ENCODE measurements at regions of chr2 and their contacts with region 1.

Region 1: GRCh38 chr2:19863303-19864041 is 38.3 kb downstream of the TTC32 start:
- DNase-seq: peak; percentile 70 to 72
- ATAC-seq: peak; percentile 87 to 93
- H3K4me3 ChIP-seq: no peak overlapping the region
- H3K27ac ChIP-seq: peak overlapping the region; percentile 69 to 77
- H3K4me1 ChIP-seq: peaks cover 17% of the 10 kb centered on the region
- CTCF ChIP-seq: peak; percentile 99
- EP300 ChIP-seq: no peak
- POLR2A ChIP-seq: no peak
- RAD21 ChIP-seq: peak; percentile 99 to 100

Region 2: GRCh38 chr2:18387441-18388206 is 1475.8 kb before region 1 on chr2:
- CTCF ChIA-PET with region 1: interaction called, 11 read pairs
- POLR2A ChIA-PET with region 1: no interaction called
- DNase-seq: peak; percentile 54 to 82
- ATAC-seq: peak; percentile 95 to 97
- H3K4me3 ChIP-seq: no peak overlapping the region
- H3K27ac ChIP-seq: peak overlapping the region; percentile 31 to 56; a peak in 3 of 6 replicates
- H3K4me1 ChIP-seq: no peaks in the 10 kb centered on the region
- CTCF ChIP-seq: peak; percentile 97
- EP300 ChIP-seq: no peak
- POLR2A ChIP-seq: no peak
- RAD21 ChIP-seq: peak; percentile 95 to 96

Region 3: GRCh38 chr2:19347619-19348562 is 515.6 kb before region 1 on chr2:
- CTCF ChIA-PET with region 1: interaction called, 12 read pairs
- POLR2A ChIA-PET with region 1: interaction called, 3 read pairs
- DNase-seq: peak; percentile 98
- ATAC-seq: peak; percentile 89 to 94
- H3K4me3 ChIP-seq: peak overlapping the region; percentile 75
- H3K27ac ChIP-seq: peak overlapping the region; percentile 91 to 92
- H3K4me1 ChIP-seq: peaks cover 6% of the 10 kb centered on the region; the same call in 1 of the 3 replicates
- CTCF ChIP-seq: no peak
- EP300 ChIP-seq: no peak
- POLR2A ChIP-seq: peak; percentile 99
- RAD21 ChIP-seq: peak in 1 of 2 experiments; percentile 53; a peak in 3 of 5 replicates

Region 4: DNA sequence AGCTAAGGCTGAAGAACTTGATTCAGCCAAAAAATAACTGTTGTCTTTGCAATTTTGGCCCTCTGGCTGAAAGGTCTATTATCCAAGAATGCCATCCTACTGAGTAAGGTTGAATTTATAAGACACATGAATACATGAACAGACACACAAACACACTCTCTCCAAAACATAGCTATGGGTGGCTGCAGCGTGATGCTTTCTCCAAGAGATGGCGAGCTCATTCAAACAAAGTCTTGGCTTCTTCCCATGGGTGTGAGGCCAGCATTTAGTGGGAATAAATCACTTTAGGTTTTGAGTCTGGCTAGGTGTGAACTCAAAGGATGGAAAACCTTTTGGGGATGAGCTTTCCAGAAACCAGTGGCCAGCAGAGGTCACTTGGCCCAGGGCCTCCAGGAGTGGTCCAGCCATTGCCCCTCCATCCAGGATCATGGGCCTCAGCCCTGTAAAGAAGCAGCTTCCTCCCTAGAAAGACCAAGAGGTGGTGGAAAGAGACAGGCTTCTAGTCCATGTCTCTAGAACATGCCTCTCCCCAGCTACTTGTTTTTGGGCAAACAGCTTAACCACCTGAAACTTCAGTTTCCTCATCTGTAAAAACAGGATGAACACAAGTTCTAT is 494.0 kb before region 1 on chr2:
- CTCF ChIA-PET with region 1: interaction called, 61 read pairs
- POLR2A ChIA-PET with region 1: no interaction called
- DNase-seq: peak in 1 of 2 experiments; percentile 58
- ATAC-seq: peak; percentile 48 to 84; a peak in 4 of 6 replicates
- H3K4me3 ChIP-seq: no peak overlapping the region
- H3K27ac ChIP-seq: peak overlapping the region in 1 of 2 experiments; percentile 34; a peak in 3 of 6 replicates
- H3K4me1 ChIP-seq: no peaks in the 10 kb centered on the region
- CTCF ChIP-seq: peak; percentile 61
- EP300 ChIP-seq: no peak
- POLR2A ChIP-seq: no peak
- RAD21 ChIP-seq: peak; percentile 81 to 84

Region 5: DNA sequence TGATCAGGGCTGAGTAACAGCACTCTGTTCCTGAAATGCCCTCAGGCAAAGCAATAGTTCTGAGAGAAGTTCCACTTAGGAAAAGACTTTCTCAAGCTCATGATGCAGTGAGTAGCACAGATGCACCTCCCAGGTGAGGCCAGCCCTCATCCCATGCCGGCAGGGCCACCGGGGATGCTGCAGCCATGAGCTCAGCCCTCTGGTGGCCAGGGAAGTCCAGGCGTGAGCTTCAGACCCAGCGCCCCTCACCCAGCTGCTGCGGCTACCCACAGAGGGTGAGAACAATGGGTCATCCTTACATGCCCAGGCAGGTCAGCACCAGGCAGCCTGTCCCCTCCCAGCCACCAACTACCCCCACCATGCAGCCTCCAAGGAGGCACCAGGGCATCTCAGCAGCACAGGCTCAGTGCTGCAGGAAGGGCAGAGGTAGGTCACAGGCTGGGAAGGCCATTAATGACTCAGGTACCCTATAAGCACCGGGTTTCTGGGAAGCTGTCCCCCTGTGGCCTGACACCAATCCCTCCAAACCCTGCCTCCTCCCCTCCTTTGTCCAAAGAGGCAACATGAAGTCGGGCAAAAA is 12.3 kb before region 1 on chr2:
- CTCF ChIA-PET with region 1: interaction called, 31 read pairs
- POLR2A ChIA-PET with region 1: no interaction called
- DNase-seq: peak; percentile 33 to 47
- ATAC-seq: peak; percentile 82 to 92
- H3K4me3 ChIP-seq: no peak overlapping the region
- H3K27ac ChIP-seq: peak overlapping the region in 1 of 2 experiments; percentile 62; a peak in 3 of 6 replicates
- H3K4me1 ChIP-seq: no peaks in the 10 kb centered on the region
- CTCF ChIP-seq: peak; percentile 13; the same call in 1 of the 3 replicates
- EP300 ChIP-seq: no peak
- POLR2A ChIP-seq: no peak
- RAD21 ChIP-seq: peak; percentile 34 to 37; a peak in 3 of 5 replicates

Region 6: DNA sequence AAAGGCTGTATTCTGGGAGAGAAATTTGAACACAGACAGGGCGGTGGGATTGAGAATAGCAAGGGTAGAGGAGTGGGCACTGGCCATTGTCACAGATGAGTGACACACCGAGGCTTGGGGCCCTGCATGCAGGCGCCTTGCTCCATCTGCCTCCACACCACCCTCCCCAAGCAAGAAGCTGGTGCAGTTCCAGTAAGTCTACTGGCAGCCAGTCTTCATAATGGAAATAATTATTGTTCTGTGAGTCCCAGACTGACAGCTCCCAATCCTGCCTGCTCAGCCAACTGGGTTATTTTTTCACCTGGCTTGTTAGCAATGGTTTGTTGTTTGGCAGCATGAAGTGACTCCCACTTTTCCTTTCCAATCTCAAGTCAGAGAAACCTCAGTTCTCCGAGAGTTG is 25.4 kb after region 1 on chr2:
- CTCF ChIA-PET with region 1: no interaction called
- POLR2A ChIA-PET with region 1: no interaction called
- DNase-seq: no peak
- ATAC-seq: no peak
- H3K4me3 ChIP-seq: no peak overlapping the region
- H3K27ac ChIP-seq: no peak overlapping the region
- H3K4me1 ChIP-seq: no peaks in the 10 kb centered on the region
- CTCF ChIP-seq: no peak
- EP300 ChIP-seq: no peak
- POLR2A ChIP-seq: no peak
- RAD21 ChIP-seq: no peak

Region 7: DNA sequence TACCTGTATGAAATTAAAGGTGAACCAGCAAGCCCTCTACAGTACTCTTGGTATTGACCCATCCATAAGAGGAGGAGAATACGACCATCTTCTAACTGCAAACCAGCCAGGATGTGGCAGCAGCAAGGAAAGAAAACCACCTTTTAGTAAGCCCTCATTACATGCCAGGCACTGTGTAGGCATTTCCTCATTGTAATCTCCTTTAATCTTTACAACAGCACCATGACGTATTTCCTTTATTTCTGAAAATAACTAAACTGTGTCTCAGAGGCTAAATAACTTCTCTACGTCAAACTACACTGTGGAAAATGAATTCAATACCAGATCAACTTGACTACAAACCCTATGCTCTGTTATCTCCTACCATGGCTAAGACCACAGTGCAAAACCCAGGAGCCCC is 108.2 kb after region 1 on chr2:
- CTCF ChIA-PET with region 1: no interaction called
- POLR2A ChIA-PET with region 1: no interaction called
- DNase-seq: no peak
- ATAC-seq: no peak
- H3K4me3 ChIP-seq: no peak overlapping the region
- H3K27ac ChIP-seq: no peak overlapping the region
- H3K4me1 ChIP-seq: no peaks in the 10 kb centered on the region
- CTCF ChIP-seq: no peak
- EP300 ChIP-seq: no peak
- POLR2A ChIP-seq: no peak
- RAD21 ChIP-seq: no peak

Region 8: DNA sequence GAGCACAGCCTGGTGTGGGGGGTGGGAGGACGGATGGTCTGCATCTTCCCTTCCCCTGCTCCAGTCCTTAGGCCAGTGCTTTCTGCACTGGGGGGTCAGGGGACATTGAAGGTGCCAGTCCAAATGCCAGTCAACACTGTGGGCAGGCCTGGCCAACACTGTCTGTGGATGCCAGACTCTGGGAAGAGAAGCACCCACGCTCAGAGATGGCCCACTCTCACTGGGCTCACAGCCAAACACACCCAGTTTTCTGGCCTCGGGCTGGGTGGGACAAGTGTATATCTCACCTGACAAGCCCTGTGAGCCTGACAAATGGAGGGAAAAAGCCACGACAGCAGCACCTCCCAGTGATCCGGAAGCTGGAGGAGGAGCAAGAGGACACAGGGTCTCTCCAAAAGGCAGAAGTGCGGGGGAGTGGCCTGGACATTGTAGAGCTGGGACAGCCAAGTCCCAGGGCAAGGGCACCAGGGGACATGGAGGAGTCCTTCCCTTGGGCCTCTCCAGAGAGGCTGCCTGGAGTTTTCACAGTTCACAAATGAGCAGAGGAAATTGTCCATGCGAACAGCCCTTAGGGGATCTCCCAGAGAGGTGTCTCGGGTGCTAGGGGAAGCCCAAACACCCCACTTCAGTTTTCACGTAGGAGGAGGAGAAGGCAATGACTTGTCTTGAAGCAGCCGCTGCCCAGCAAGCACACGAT is 282.2 kb after region 1 on chr2:
- CTCF ChIA-PET with region 1: no interaction called
- POLR2A ChIA-PET with region 1: no interaction called
- DNase-seq: no peak
- ATAC-seq: no peak
- H3K4me3 ChIP-seq: no peak overlapping the region
- H3K27ac ChIP-seq: peak overlapping the region in 1 of 2 experiments; percentile 27; a peak in 1 of 6 replicates
- H3K4me1 ChIP-seq: peaks cover 56% of the 10 kb centered on the region
- CTCF ChIP-seq: no peak
- EP300 ChIP-seq: no peak
- POLR2A ChIP-seq: no peak
- RAD21 ChIP-seq: no peak